ENCODE measurements at regions of chr4 and their contacts with region 1.

Region 1: GRCh38 chr4:53929955-53930798 is 134.2 kb downstream of the CHIC2 start:
- DNase-seq: peak in 9 of 10 donors; percentile 55 to 82 (median 64)
- H3K4me3 ChIP-seq: peak overlapping the region in 14 of 59 donors; percentile 7 to 39 (median 25)
- H3K27ac ChIP-seq: no peak overlapping the region
- H3K27me3 ChIP-seq: peaks cover 0 to 8% (median 0%) of the 10 kb centered on the region in 45 donors
- CTCF ChIP-seq: peak; percentile 53 to 91 (median 82)

Region 2: GRCh38 chr4:52963693-52964410 is 966.3 kb before region 1 on chr4:
- intact Hi-C with region 1: no loop called
- DNase-seq: no peak
- H3K4me3 ChIP-seq: no peak overlapping the region
- H3K27ac ChIP-seq: no peak overlapping the region
- H3K27me3 ChIP-seq: no peaks in the 10 kb centered on the region
- CTCF ChIP-seq: no peak

Region 3: DNA sequence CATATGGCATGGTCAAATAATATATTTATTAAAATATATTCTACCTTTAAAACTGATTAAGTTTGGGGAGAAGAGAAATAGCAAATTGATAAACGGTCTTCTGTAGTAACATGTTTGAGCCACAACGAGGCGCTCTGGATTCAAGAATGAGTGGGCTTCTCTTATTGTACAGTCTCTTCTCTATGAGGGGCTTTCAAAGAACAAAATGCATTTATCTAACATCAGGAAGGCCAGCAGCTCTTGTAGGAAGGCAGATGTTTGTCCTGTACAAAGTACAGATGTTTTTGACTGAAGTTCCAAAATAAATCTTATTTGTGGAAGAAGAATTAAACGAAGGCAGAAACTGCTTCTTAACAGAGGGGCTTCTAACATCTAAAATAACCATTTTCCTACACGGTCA is 914.5 kb before region 1 on chr4:
- intact Hi-C with region 1: loop called in 1 of 2 experiments (anchors 10 kb)
- DNase-seq: peak in 2 of 10 donors; percentile 9 to 28
- H3K4me3 ChIP-seq: no peak overlapping the region
- H3K27ac ChIP-seq: no peak overlapping the region
- H3K27me3 ChIP-seq: no peaks in the 10 kb centered on the region
- CTCF ChIP-seq: peak; percentile 26 to 76 (median 62)

Region 4: DNA sequence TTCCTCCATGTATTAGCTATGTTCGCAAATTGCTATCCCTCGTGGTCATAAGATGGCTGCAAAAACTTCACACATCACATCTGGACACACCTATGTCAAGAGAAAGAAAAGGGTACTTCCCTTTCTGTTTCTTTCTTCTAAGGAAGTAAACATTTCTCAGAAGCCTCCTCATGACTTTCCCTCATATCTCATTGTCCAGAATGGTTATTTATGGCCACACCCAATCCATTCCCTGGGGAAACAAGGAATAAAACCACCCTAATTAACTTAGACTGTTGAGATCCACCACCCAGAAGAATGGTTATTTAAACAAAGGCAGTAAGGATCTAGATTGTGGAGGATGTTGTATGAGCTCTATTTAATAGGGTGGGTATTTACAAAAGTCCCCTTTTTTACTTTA is 178.1 kb before region 1 on chr4:
- intact Hi-C with region 1: no loop called
- DNase-seq: no peak
- H3K4me3 ChIP-seq: no peak overlapping the region
- H3K27ac ChIP-seq: no peak overlapping the region
- H3K27me3 ChIP-seq: peaks cover 0 to 30% (median 3%) of the 10 kb centered on the region in 45 donors
- CTCF ChIP-seq: no peak

Region 5: DNA sequence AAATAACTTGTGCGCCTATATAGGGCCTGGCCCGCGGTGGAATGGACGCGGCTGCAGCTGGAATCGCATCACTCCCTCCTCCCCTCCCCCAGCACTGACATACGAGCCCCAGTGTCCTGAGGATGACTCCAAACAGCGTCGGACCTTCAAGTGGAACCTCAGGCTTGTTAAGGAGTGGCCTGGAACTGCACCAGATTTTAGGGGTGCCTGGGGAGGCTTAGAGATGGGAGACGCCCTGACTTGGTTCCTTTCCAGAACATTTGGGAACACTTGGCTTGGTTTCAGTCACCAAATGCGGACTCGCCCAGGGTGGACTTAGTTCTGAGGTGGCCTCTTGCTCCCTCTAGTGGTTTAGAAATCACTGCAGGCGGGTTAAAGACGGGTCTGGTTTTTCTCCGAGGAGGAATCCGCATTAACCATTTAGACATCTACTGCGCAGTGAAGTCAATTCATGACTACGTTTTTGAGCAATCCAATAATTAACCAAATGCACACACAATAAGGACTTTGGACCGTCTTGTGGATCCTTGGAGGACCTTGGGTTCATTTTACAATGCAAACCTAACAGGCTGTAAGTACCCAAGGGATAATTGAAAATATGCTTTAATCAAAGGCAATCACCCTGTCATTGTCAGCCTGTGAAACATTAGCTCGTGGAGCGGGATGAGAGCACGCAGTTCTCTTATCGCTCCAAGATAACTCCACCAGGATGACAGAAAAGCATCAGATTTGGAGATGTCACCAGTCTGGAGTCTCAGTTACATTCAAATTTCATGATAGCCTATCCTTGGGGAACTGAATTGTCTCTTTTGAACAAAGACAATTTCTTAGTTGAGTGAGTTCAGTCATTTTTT is 287.7 kb after region 1 on chr4:
- intact Hi-C with region 1: loop called (anchors 2 to 5 kb)
- DNase-seq: peak in 8 of 10 donors; percentile 42 to 77 (median 62)
- H3K4me3 ChIP-seq: peak overlapping the region; percentile 26 to 73 (median 55)
- H3K27ac ChIP-seq: peak overlapping the region in 3 of 59 donors; percentile 4 to 23 (median 11)
- H3K27me3 ChIP-seq: peaks cover 0 to 41% (median 0%) of the 10 kb centered on the region in 45 donors
- CTCF ChIP-seq: peak; percentile 83 to 97 (median 92)